Astrocyte of the spinal cord (primary cell): ENCODE measurements at regions of chr1 and their contacts with region 1.

Region 1: GRCh38 chr1:3410142-3410925 is 44.1 kb upstream of the ARHGEF16 start:
- DNase-seq: peak; percentile 70
- H3K4me3 ChIP-seq: no peak overlapping the region
- CTCF ChIP-seq: peak; percentile 84

Region 2: DNA sequence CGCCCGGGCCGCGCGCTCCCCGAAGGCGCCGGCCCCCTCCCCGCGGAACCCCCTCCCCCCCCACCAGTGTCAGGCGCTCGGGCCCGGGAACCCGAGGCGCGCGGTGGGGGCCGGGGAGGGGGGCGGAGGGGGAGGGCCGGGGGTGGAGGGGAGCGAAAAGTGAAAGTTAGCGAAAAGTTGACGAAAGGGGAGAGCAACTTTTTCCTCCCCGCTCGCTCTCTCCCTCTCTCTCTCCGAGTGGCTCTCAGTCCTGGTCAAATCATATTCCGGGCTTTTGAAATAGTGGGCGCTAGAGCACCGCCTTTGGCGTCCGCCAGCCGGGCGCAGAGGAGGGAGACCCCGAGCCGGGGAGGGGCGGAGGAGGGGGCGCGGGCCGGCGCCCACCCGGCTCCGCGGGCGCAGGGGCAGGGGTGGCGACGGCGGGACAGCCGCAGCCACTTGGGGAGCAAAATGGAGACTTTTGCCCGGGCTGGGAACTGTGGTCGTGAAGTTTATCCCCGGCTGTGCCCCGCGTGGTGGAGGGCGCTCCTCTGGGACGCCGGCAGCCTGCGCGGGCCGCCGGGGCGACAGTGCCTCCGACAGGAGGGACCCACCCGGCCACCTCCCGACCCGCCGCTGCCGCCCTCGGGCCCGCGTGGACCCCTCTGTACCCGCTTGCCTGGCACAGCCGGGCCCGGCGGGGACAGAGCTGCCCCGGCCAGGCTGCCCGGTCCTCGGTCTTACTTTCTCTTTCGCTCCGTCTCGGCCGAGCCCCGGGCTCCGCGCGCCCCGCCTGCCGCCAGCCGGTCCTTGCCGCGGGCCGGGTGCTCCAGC is 340.6 kb before region 1 on chr1:
- in situ Hi-C with region 1: loop called (anchors 25 kb)
- DNase-seq: peak; percentile 65
- H3K4me3 ChIP-seq: peak overlapping the region; percentile 46
- CTCF ChIP-seq: peak; percentile 41